ENCODE measurements at regions of chr6 and their contacts with region 1.

Region 1: GRCh38 chr6:85482905-85483700 is 33.2 kb downstream of the NT5E start:
- DNase-seq: peak; percentile 88
- ATAC-seq: peak; percentile 96

Region 2: DNA sequence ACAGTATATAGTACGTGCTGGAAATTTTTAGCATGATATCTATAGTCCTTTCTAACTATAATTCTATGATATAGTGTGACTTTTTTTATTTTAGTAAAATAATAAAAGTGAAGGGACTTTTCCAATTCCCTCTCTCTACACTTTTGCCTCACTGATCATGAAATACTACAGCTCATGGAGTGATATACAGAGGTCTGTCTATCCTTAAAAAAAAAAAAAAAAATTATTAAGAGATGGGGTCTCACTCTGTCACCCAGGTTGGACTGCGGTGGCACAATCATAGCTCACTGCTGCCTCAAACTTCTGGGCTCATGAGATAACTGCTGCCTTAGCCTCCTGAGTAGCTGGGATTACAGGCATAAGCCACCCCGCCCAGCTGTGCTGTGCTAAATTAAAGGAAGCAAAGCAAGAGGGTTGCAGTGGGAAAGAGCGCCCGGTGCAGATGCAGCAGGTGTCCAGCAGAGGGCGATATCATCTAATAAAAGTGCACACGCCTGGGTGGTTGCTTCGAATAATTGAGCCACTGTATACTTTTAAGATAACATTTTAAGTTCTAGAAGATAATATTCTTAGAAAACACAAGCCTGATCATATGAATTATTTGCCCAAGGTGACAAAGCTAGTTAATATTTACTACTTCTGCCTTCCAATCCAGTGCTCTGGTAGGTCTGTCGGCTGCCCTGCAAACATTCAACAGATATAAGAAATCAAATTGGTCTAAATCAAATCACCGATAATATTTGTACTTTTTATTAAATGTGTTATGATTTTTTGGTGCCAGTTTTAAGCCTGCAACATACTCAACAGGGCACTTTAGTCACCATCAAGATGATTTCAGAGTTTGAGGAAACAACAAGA is 128.1 kb before region 1 on chr6:
- intact Hi-C with region 1: loop called (anchors 2 kb)
- DNase-seq: peak; percentile 79
- ATAC-seq: peak; percentile 92

Region 3: DNA sequence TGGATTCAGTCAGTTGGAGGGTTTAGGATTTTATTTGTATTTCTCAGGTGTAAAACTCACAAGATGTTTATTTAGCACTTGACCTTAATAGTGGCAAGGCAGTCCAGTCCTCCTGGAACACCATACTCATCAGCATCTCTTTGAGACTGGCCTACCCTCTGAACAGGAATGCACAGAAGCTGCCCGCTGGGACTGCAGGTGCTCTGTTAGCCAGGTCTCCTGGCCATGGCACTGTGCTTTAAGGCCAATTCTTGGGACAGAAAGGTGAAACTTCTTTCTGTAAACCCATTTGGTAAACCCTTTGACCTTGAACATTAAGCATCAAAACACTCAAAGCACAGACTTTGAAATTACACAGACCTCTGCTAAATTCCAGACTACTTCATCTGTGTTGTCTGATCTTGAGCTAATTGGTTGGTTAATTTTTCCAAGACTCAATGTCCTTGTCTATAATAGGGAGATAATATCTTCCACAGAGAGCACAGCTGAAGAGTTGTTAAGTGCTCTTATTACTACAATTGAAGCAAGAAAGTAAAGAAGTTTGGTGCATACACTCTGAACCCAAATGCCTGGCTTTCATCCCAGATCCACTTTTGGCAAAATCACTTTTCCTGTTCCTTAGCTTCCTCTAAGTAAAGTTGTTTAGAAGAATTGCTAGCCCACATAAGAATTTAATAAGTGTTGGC is 88.1 kb before region 1 on chr6:
- intact Hi-C with region 1: no loop called
- DNase-seq: no peak
- ATAC-seq: no peak